ENCODE measurements at regions of chr2 and their contacts with region 1.

Region 1: GRCh38 chr2:180125245-180125962 is 118.3 kb upstream of the CWC22 start:
- DNase-seq: peak; percentile 51
- H3K4me3 Mint-ChIP-seq: no peak overlapping the region
- H3K27ac Mint-ChIP-seq: no peak overlapping the region
- H3K4me1 Mint-ChIP-seq: peaks cover 23% of the 10 kb centered on the region
- H3K27me3 Mint-ChIP-seq: no peaks in the 10 kb centered on the region
- CTCF ChIP-seq: peak; percentile 68

Region 2: DNA sequence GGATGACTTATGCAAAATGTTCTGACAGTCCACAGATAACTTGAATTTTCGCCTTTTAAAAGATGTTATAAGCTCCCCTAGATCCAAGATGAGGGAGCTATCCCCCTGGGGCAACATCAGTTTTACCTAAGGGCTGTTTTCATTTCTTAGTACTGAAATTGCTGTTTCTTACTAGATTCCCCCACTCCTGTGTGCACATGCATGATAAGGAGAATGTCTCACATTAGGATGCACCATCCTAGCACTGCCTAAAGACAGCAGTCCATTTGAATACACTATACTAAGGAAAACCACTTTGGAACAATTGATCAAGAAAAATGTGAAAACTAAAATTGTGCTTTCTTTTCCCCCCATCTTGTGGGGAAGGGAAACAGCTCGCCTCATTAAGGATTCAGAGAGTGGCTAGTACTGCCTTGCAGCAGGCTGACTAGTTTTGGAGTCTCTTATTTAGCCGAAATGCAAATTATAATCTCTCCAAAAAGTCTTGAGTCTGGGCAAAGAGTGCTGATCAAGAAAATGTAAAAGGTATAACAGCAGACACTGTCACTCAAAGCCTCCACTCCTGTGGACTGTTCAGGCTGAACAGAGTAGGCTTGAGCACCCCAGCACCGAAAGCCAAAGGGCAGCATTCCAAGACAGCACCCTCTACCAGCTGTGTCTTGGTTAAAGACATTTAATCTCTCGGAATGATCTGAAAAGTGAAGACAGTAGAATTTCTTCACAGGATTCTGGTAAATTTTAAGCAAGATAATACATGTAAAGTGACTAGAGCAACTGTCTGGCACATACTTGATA is 329.0 kb before region 1 on chr2:
- CTCF ChIA-PET with region 1: no interaction called
- intact Hi-C with region 1: no loop called
- DNase-seq: no peak
- H3K4me3 Mint-ChIP-seq: no peak overlapping the region
- H3K27ac Mint-ChIP-seq: no peak overlapping the region
- H3K4me1 Mint-ChIP-seq: no peaks in the 10 kb centered on the region
- H3K27me3 Mint-ChIP-seq: no peaks in the 10 kb centered on the region
- CTCF ChIP-seq: no peak

Region 3: GRCh38 chr2:180411661-180412060 is 286.3 kb after region 1 on chr2:
- CTCF ChIA-PET with region 1: no interaction called
- intact Hi-C with region 1: loop called (anchors 2 kb)
- DNase-seq: peak; percentile 30
- H3K4me3 Mint-ChIP-seq: peak overlapping the region; percentile 40
- H3K27ac Mint-ChIP-seq: peak overlapping the region; percentile 83
- H3K4me1 Mint-ChIP-seq: peaks cover 29% of the 10 kb centered on the region
- H3K27me3 Mint-ChIP-seq: no peaks in the 10 kb centered on the region
- CTCF ChIP-seq: no peak

Region 4: GRCh38 chr2:180679693-180680092 is 554.3 kb after region 1 on chr2:
- CTCF ChIA-PET with region 1: no interaction called
- intact Hi-C with region 1: loop called (anchors 10 kb)
- DNase-seq: no peak
- H3K4me3 Mint-ChIP-seq: no peak overlapping the region
- H3K27ac Mint-ChIP-seq: no peak overlapping the region
- H3K4me1 Mint-ChIP-seq: peaks cover 25% of the 10 kb centered on the region
- H3K27me3 Mint-ChIP-seq: no peaks in the 10 kb centered on the region
- CTCF ChIP-seq: no peak

Region 5: DNA sequence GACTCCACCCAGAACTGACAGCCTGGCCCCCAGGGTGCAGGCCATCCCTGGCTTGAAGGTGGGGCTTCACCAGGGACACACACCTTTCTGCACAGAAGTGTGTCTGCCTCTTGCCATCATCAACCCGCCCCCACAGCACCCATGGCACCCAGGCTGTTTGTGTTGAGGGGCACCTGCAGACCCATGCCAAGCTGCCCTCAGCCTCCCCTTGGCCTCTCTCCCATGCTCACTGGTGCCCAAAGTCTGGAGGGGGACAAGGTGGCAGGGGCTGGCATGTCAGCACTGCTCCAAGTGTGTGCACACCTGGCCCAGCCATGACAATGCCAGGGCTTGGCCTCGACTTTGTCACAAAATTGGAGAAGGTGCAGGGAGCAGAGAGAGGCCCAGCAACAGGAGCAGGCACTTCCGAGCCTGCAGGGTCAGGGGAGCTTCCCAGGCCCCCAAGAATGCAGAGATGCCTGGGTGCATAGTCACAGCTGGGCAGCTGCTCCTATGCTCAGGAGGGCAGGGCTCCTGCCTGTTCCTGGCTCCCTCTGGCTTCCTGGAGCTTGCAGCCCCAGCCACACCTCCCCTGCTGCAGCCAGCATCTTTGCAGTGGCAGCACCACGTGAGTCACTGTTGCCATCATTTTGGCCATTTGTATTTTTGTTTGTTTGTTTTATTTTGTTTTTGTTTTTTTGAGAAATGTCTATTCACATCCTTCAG is 574.4 kb after region 1 on chr2:
- CTCF ChIA-PET with region 1: no interaction called
- intact Hi-C with region 1: no loop called
- DNase-seq: no peak
- H3K4me3 Mint-ChIP-seq: no peak overlapping the region
- H3K27ac Mint-ChIP-seq: no peak overlapping the region
- H3K4me1 Mint-ChIP-seq: no peaks in the 10 kb centered on the region
- H3K27me3 Mint-ChIP-seq: no peaks in the 10 kb centered on the region
- CTCF ChIP-seq: no peak

Region 6: DNA sequence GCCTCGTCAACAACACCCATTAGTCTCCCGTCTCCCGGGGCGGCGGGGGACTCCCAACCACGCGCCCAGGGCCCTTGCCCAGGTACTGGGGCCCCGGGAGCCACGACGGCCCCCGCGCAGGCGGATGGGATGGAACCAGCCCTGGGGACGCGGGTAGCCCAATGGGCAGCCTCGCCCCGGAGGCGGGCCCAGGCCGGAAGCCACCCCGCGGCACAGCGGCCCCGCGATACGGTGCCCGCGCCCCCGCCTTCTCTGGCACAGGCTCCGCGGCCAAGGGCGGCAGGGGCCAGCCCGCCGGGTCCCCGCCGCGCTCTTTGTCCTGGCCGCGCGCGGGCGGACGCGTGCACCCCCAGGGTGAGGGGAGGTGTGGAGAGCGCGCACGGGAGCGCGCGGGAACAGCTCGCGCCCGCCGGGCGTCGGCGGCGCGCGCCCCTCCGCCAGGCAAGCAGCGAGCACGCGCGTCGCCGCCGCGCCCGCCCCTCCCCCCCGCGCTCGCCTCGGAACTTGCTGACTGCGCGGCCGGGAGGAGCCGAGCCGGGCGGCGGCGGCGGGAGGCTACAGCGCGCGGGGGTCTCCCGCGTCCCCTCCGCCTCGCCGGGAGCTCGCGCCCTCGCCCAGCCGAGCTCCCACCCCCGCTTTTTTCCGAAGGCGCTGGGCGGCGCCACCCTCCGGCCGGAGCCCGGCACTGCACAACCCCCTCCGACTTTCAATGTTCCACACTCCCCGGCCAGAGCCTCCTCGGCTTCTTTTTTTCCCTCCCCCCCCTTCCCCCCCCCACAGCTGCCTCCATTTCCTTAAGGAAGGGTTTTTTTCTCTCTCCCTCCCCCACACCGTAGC is 854.9 kb after region 1 on chr2 and contains the start of gene UBE2E3:
- CTCF ChIA-PET with region 1: interaction called, 6 read pairs
- intact Hi-C with region 1: loop called (anchors 2 kb)
- DNase-seq: peak; percentile 86
- H3K4me3 Mint-ChIP-seq: peak within 1 kb of the TSS; percentile 86
- H3K27ac Mint-ChIP-seq: peak within 1 kb of the TSS; percentile 90
- H3K4me1 Mint-ChIP-seq: peaks cover 39% of the 10 kb centered on the region
- H3K27me3 Mint-ChIP-seq: no peaks in the 10 kb centered on the region
- CTCF ChIP-seq: peak; percentile 80
- total RNA-seq, gene UBE2E3: 57.8 and 64.3 TPM in 2 replicates

Region 7: GRCh38 chr2:181104512-181105115 is 979.2 kb after region 1 on chr2:
- CTCF ChIA-PET with region 1: no interaction called
- intact Hi-C with region 1: loop called (anchors 2 kb)
- DNase-seq: peak; percentile 39
- H3K4me3 Mint-ChIP-seq: no peak overlapping the region
- H3K27ac Mint-ChIP-seq: no peak overlapping the region
- H3K4me1 Mint-ChIP-seq: peaks cover 9% of the 10 kb centered on the region
- H3K27me3 Mint-ChIP-seq: no peaks in the 10 kb centered on the region
- CTCF ChIP-seq: peak; percentile 68

Region 8: GRCh38 chr2:181573140-181573736 is 1447.8 kb after region 1 on chr2:
- CTCF ChIA-PET with region 1: no interaction called
- intact Hi-C with region 1: loop called (anchors 10 kb)
- DNase-seq: peak; percentile 52
- H3K4me3 Mint-ChIP-seq: no peak overlapping the region
- H3K27ac Mint-ChIP-seq: no peak overlapping the region
- H3K4me1 Mint-ChIP-seq: no peaks in the 10 kb centered on the region
- H3K27me3 Mint-ChIP-seq: no peaks in the 10 kb centered on the region
- CTCF ChIP-seq: peak; percentile 52

Measured in Calu3 (cell line).